ENCODE measurements at regions of chr4 and their contacts with region 1.

Region 1: DNA sequence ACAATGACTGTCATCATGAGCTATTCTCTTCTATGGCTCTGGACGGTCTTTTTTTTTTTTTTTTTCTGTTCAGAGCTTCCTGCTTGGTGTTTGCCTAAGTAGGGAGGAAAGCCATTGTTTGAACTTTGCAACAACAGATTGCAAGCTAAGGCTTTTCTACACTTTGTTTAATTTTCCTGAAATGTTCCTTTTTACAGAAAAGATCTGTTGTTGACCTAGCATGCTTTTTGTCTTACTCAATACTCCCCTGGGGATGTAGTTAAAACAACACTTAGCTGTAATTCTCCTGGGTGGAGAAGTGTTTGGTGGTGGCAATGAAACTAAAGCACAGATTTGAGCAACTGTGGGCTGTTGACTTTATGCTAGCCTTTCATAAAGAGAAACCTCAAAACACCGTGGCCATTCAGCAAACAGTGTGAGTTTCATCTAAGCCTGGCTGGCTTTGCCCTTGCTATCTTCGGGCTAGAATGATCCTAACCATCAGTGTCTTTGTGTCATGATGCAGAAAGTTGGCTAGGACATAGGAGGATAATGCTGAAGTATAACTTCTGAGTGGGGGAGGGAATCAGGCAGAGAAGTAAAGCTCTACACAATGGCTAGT is 110.5 kb downstream of the ANXA3 start:
- DNase-seq: no peak
- ATAC-seq: no peak
- H3K4me3 ChIP-seq: no peak overlapping the region
- H3K4me3 Mint-ChIP-seq: no peak overlapping the region
- H3K27ac ChIP-seq: no peak overlapping the region
- H3K27ac Mint-ChIP-seq: peak overlapping the region; percentile 42 to 48
- H3K4me1 ChIP-seq: peaks cover 16 to 22% of the 10 kb centered on the region in 2 experiments
- H3K4me1 Mint-ChIP-seq: peaks cover 38 to 60% (median 40%) of the 10 kb centered on the region in 3 donors
- H3K27me3 ChIP-seq: no peaks in the 10 kb centered on the region
- H3K27me3 Mint-ChIP-seq: no peaks in the 10 kb centered on the region

Region 2: DNA sequence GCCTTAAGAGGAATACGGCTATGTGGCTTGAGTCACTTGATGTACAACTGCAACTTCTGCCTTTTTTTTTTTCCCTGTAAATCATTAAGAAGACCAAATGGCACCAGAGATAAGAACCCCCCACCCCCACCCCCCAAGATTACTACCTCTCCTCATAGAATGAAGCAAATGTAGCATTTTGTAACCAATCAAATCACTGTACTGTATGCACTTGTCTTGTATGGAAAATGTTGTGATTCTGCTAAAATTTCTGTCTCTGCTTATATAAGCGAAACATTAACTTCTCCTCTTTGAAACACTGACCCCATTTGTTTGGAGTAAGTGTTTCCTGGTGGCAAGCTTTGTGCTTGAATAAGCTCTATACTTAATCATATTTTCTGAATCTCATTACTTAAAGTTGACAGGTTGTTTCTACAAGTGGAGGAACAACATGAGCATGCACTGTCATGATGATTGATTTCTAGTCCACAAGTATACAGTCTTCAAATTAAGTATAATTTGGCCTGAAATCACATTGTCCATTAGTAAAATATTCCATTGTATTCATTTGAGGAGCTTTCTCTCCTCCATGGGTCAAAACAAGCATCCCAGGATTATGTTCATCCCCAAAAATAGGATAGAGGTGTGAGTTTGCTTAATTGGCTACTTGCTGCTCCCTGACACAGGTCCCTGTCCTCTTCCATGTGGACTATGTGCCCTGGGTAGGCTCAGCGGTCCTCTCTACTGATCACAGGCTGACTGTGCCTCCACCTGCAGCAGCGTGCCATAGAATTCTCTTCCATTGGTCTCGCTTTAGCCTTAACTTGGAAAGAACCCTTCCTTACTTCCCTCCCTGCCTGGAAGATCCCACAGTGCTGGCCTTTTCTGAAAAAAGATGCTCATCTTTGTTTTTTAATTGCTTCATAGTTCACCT is 10.1 kb after region 1 on chr4:
- CTCF ChIA-PET with region 1: no interaction called
- POLR2A ChIA-PET with region 1: no interaction called
- DNase-seq: no peak
- ATAC-seq: no peak
- H3K4me3 ChIP-seq: no peak overlapping the region
- H3K4me3 Mint-ChIP-seq: no peak overlapping the region
- H3K27ac ChIP-seq: no peak overlapping the region
- H3K27ac Mint-ChIP-seq: no peak overlapping the region
- H3K4me1 ChIP-seq: peaks cover 0 to 6% of the 10 kb centered on the region in 2 experiments
- H3K4me1 Mint-ChIP-seq: peaks cover 2 to 9% (median 8%) of the 10 kb centered on the region in 3 donors
- H3K27me3 ChIP-seq: peaks cover 0 to 4% of the 10 kb centered on the region in 2 experiments
- H3K27me3 Mint-ChIP-seq: no peaks in the 10 kb centered on the region

Region 3: GRCh38 chr4:78695910-78696309 is 33.9 kb after region 1 on chr4:
- CTCF ChIA-PET with region 1: no interaction called
- POLR2A ChIA-PET with region 1: no interaction called
- DNase-seq: no peak
- ATAC-seq: no peak
- H3K4me3 ChIP-seq: no peak overlapping the region
- H3K4me3 Mint-ChIP-seq: no peak overlapping the region
- H3K27ac ChIP-seq: no peak overlapping the region
- H3K27ac Mint-ChIP-seq: no peak overlapping the region
- H3K4me1 ChIP-seq: peaks cover 0 to 5% of the 10 kb centered on the region in 2 experiments
- H3K4me1 Mint-ChIP-seq: peaks cover 5 to 14% (median 5%) of the 10 kb centered on the region in 3 donors
- H3K27me3 ChIP-seq: peaks cover 0 to 2% of the 10 kb centered on the region in 2 experiments
- H3K27me3 Mint-ChIP-seq: no peaks in the 10 kb centered on the region

Region 4: GRCh38 chr4:78809928-78810835 is 148.2 kb after region 1 on chr4:
- CTCF ChIA-PET with region 1: no interaction called
- POLR2A ChIA-PET with region 1: interaction called in 1 of 2 experiments, 10 read pairs
- DNase-seq: no peak
- ATAC-seq: no peak
- H3K4me3 ChIP-seq: no peak overlapping the region
- H3K4me3 Mint-ChIP-seq: no peak overlapping the region
- H3K27ac ChIP-seq: no peak overlapping the region
- H3K27ac Mint-ChIP-seq: no peak overlapping the region
- H3K4me1 ChIP-seq: no peaks in the 10 kb centered on the region
- H3K4me1 Mint-ChIP-seq: peaks cover 4 to 28% (median 20%) of the 10 kb centered on the region in 3 donors
- H3K27me3 ChIP-seq: no peaks in the 10 kb centered on the region
- H3K27me3 Mint-ChIP-seq: no peaks in the 10 kb centered on the region

Region 5: DNA sequence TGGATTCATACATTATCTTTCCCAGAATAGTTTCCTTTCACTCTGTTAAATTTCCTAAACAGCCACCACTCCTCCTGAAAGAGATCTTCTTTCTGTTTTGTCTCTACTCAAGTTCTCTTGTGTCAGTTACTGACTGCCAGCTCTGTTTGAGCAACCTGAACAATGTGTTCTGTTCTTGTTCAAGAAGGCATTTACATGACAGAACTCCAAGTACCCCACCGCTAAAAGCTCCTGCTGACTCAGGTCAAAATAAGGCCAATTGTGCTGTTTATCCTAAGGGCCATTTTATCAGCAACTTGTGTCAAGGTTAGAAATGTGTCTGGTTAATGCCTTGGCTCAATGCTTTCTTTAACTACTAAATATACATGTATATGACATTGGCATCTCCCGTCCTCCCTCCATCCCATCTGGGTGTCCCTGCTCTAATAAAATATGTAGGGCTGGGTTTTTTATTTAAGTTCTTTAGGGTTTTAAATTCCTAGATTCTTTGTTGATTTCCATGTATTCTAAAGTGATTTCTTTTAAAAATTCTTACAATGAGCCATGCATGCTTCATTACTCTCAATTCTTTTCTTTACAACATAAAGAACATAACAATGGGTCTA is 421.5 kb after region 1 on chr4:
- CTCF ChIA-PET with region 1: no interaction called
- POLR2A ChIA-PET with region 1: no interaction called
- DNase-seq: no peak
- ATAC-seq: no peak
- H3K4me3 ChIP-seq: no peak overlapping the region
- H3K4me3 Mint-ChIP-seq: no peak overlapping the region
- H3K27ac ChIP-seq: no peak overlapping the region
- H3K27ac Mint-ChIP-seq: no peak overlapping the region
- H3K4me1 ChIP-seq: no peaks in the 10 kb centered on the region
- H3K4me1 Mint-ChIP-seq: no peaks in the 10 kb centered on the region
- H3K27me3 ChIP-seq: no peaks in the 10 kb centered on the region
- H3K27me3 Mint-ChIP-seq: no peaks in the 10 kb centered on the region